ENCODE measurements at regions of chr11 and their contacts with region 1.

Region 1: DNA sequence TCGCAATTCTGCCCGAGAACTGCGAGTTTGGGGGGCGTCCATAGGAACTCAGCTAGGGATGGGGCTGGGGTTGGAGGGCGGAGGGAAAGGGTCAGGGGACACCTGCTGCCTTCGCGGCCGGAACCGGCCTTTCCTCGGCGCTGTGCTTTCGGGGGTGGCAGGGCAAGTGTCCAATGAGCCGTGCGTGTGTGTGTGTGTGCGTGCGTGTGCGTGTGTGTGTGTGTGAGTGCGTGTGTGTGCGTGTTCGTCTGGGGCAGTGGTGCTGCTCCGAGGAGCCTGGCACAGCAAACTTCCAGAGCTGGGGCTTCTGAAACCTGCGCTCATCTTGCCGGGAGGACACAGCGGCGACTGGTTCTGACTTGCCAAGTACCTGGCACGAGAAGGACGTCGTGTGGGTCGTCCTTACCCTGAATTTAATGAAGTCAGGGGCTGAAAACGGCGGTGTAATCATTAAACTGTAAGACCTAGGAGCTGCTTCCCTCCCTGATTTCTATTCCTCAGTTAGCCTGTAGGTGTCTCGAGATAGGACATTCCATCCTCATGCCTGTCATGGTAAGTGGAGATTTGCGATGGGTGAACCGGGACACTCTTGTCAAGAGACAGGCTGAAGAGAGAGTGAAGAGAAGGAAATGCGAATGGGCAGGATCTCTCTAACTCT is 27.0 kb upstream of the AMOTL1 start:
- DNase-seq: no peak
- H3K4me3 ChIP-seq: peak overlapping the region; percentile 55
- H3K27me3 ChIP-seq: no peaks in the 10 kb centered on the region
- CTCF ChIP-seq: peak; percentile 68

Region 2: GRCh38 chr11:94543695-94544645 is 197.2 kb before region 1 on chr11 and contains the start of gene FUT4:
- CTCF ChIA-PET with region 1: no interaction called
- POLR2A ChIA-PET with region 1: no interaction called
- DNase-seq: peak; percentile 31
- H3K4me3 ChIP-seq: peak within 1 kb of the TSS; percentile 53
- H3K27me3 ChIP-seq: no peaks in the 10 kb centered on the region
- CTCF ChIP-seq: no peak
- polyA plus RNA-seq, gene FUT4: 1.9 and 2.3 TPM in 2 replicates

Region 3: DNA sequence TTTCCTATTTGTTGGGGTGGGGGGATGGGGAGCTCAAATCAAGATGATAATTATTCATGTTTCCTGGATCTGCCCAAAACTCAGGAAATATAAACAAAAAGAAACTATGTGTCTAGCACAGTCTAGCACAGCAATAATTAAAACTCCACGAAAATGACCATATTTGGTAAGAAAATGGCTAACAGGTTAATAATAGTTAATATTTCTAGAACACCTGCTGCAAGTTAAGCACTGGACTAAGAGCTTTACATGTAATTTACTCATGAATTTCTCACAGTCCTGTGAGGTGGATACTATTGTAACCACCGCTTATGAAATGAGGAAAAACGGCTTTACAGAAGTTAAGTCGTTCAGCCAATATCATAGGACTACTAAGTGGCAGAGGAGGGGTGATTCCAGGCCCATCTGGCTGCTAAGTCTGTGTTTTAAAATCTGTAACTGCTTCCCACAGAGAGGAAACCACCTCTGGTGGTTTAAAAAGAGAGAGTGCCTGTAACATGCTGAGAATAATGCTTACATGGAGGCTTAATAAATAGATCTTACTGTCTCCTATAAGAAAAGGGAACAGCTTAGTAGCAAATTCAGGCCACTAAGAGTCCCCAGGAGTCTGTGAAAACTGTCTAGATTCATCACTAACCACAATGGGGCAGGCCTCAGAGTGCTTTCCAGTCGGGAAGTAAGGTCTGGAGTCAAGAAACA is 16.0 kb after region 1 on chr11:
- CTCF ChIA-PET with region 1: interaction called, 43 read pairs
- POLR2A ChIA-PET with region 1: no interaction called
- DNase-seq: no peak
- H3K4me3 ChIP-seq: no peak overlapping the region
- H3K27me3 ChIP-seq: no peaks in the 10 kb centered on the region
- CTCF ChIP-seq: no peak

Region 4: GRCh38 chr11:94767761-94768601 is 26.8 kb after region 1 on chr11 and contains the start of gene AMOTL1:
- CTCF ChIA-PET with region 1: interaction called, 10 read pairs
- POLR2A ChIA-PET with region 1: no interaction called
- DNase-seq: no peak
- H3K4me3 ChIP-seq: peak within 1 kb of the TSS; percentile 56
- H3K27me3 ChIP-seq: no peaks in the 10 kb centered on the region
- CTCF ChIP-seq: 0 out of 2 replicates have a peak, but pooled peaks have one; percentile 7
- polyA plus RNA-seq, gene AMOTL1: 21.5 and 25.5 TPM in 2 replicates

Region 5: DNA sequence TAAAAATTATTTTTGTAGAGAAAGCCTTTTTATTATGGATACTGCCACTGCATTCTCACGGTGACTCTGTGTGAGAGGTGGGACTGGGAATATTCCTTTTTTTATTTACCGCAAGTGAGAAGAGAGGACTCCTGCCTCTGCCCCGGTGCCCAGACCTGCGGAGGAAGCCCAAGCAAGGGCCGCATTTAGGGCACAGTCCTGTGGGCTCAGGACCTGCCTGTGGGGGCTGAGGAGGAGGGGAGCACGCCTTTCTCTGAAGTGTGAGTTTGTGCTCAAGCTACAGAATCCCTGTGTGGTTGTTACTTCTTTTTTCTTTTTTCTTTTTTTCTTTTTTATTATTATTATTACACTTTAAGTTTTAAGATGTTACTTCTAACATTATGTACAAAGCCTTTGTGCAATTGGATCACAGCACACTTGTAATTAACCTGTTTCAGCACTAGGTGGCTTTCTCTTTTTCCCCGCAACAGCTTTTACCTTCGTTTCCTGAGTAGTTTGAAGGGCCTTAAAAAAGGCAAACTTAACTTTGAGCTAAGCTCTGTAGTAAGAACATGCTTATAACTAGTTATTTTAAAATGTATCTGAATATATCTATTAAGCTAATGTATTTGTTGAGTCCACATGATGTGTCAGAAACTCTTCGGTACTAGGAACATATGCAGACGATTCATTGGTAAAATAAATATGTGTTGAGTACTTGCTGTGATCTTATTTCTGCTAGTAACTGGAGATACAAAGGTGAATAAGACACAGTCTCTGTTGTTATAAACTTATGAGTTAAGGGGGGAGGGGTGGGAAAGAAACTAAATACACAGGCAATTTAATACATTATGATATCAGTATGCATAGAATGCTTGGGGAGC is 45.3 kb after region 1 on chr11:
- CTCF ChIA-PET with region 1: interaction called, 11 read pairs
- POLR2A ChIA-PET with region 1: no interaction called
- DNase-seq: no peak
- H3K4me3 ChIP-seq: no peak overlapping the region
- H3K27me3 ChIP-seq: no peaks in the 10 kb centered on the region
- CTCF ChIP-seq: peak; percentile 63

Region 6: DNA sequence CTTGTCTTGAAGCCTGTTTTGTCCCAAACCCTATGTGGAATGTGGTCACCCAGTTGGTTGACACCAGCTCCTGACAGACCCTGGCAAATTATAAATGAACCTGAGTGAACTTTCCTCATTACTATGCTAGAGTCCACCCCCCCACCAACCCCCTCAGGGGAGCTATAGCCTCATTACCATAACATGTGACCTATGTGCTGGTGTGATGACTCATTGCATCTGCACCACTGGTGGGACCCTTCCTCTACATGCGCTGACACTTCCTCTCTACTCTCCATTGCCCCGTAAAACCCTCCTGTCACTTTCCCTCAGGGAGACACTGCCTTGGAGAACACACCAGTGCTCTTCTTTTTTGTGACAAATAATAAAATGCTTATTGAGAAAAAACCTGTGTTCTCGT is 594.8 kb after region 1 on chr11:
- CTCF ChIA-PET with region 1: no interaction called
- POLR2A ChIA-PET with region 1: no interaction called
- DNase-seq: no peak
- H3K4me3 ChIP-seq: no peak overlapping the region
- H3K27me3 ChIP-seq: no peaks in the 10 kb centered on the region
- CTCF ChIP-seq: no peak

Measured in BJ (cell line).